GM12878 (cell line): ENCODE measurements at regions of chr18 and their contacts with region 1.

Region 1: GRCh38 chr18:45879681-45880655 is 54.5 kb downstream of the SIGLEC15 start:
- DNase-seq: peak; percentile 17
- ATAC-seq: peak; percentile 96
- H3K4me3 ChIP-seq: no peak overlapping the region
- H3K27ac ChIP-seq: no peak overlapping the region
- H3K4me1 ChIP-seq: peaks cover 5% of the 10 kb centered on the region; the same call in 1 of the 2 replicates
- H3K27me3 ChIP-seq: no peaks in the 10 kb centered on the region
- CTCF ChIP-seq: peak; percentile 95 to 99 (median 99)
- EP300 ChIP-seq: no peak
- POLR2A ChIP-seq: no peak
- RAD21 ChIP-seq: peak; percentile 93

Region 2: DNA sequence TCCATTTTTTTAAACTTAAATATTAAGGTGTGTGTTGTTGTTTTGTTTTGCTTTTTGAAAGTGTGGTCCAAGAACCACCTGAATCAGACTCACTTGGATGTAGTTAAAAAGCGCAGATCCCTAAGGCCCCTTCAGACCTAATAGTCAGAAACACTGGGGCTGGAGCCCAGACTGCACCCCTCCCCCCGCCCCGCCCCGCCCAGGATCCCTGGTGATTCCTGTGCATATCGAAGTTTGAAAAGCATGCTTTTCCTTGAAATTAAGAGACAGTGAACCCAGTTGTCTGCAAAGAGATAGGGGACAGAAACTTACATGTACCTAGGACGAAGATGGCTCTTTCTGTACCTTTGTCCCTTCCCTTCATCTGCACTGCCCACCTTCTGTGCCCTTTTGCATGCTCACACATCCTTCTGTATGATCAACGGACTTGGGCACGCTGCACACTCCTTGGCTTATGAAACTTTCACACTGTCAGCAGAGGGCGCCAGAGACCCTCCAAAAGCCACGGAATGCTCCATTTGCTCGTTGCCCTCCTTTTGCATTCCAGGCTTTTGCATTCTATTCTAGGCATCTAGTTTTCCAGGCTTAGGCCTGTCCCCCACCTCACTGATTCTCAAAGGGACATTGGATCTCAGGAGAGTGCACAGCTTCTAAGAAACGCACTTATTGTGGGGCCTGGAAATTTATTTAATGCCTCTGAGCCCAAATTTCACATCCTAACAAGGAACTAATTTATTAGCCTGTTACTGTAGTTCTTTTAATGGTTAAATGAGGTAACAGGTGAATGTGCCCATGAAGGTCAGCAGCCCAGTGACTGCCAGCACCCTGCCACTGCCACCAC is 188.8 kb before region 1 on chr18:
- CTCF ChIA-PET with region 1: interaction called, 126 read pairs
- POLR2A ChIA-PET with region 1: interaction called, 3 read pairs
- RAD21 ChIA-PET with region 1: interaction called, 68 read pairs
- SMC1A ChIA-PET with region 1: interaction called, 88 read pairs
- in situ Hi-C with region 1: loop called (anchors 5 kb)
- intact Hi-C with region 1: loop called (anchors 1 kb)
- DNase-seq: no peak
- ATAC-seq: peak; percentile 28
- H3K4me3 ChIP-seq: no peak overlapping the region
- H3K27ac ChIP-seq: no peak overlapping the region
- H3K4me1 ChIP-seq: peaks cover 32% of the 10 kb centered on the region
- H3K27me3 ChIP-seq: no peaks in the 10 kb centered on the region
- CTCF ChIP-seq: peak; percentile 79 to 93 (median 82)
- EP300 ChIP-seq: no peak
- POLR2A ChIP-seq: no peak
- RAD21 ChIP-seq: peak; percentile 91

Region 3: GRCh38 chr18:45730832-45731575 is 149.0 kb before region 1 on chr18:
- CTCF ChIA-PET with region 1: interaction called, 189 read pairs
- POLR2A ChIA-PET with region 1: no interaction called
- RAD21 ChIA-PET with region 1: interaction called, 87 read pairs
- SMC1A ChIA-PET with region 1: interaction called, 162 read pairs
- in situ Hi-C with region 1: no loop called
- intact Hi-C with region 1: no loop called
- DNase-seq: no peak
- ATAC-seq: no peak
- H3K4me3 ChIP-seq: no peak overlapping the region
- H3K27ac ChIP-seq: no peak overlapping the region
- H3K4me1 ChIP-seq: no peaks in the 10 kb centered on the region
- H3K27me3 ChIP-seq: no peaks in the 10 kb centered on the region; a peak in 2 of 4 replicates
- CTCF ChIP-seq: no peak
- EP300 ChIP-seq: no peak
- POLR2A ChIP-seq: no peak
- RAD21 ChIP-seq: no peak

Region 4: DNA sequence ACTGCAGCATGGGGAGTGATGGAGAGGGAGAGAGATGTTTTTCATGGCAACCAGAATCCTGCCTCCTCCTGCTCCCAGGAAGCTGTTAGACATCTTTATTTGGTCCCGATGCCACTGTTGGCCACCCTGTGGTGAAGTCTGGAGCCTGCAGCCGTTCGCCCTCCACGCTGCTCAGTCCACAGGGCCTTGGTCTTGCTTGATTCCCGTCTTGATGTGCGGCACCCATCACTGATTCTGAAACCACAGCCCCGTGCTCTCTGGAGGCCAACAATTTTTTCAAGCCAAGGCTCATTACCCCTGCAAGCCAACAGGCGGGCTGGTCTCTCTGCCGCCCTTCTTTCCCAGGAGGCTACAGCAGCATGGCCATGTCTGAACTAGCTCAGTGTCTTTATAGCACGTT is 29.9 kb before region 1 on chr18:
- CTCF ChIA-PET with region 1: interaction called, 15 read pairs
- POLR2A ChIA-PET with region 1: no interaction called
- RAD21 ChIA-PET with region 1: interaction called, 5 read pairs
- SMC1A ChIA-PET with region 1: interaction called, 8 read pairs
- in situ Hi-C with region 1: no loop called
- intact Hi-C with region 1: no loop called
- DNase-seq: peak; percentile 40
- ATAC-seq: peak; percentile 91
- H3K4me3 ChIP-seq: no peak overlapping the region
- H3K27ac ChIP-seq: peak overlapping the region; percentile 31; the same call in 1 of the 2 replicates
- H3K4me1 ChIP-seq: peaks cover 9% of the 10 kb centered on the region; the same call in 1 of the 2 replicates
- H3K27me3 ChIP-seq: no peaks in the 10 kb centered on the region
- CTCF ChIP-seq: peak; percentile 17 to 55 (median 30); a peak in 3 of 6 replicates
- EP300 ChIP-seq: no peak
- POLR2A ChIP-seq: no peak
- RAD21 ChIP-seq: no peak

Region 5: GRCh38 chr18:45967007-45967706 is 87.2 kb after region 1 on chr18 and contains the start of gene EPG5:
- CTCF ChIA-PET with region 1: interaction called, 12 read pairs
- POLR2A ChIA-PET with region 1: no interaction called
- RAD21 ChIA-PET with region 1: no interaction called
- SMC1A ChIA-PET with region 1: no interaction called
- in situ Hi-C with region 1: no loop called
- intact Hi-C with region 1: no loop called
- DNase-seq: peak; percentile 68
- ATAC-seq: peak; percentile 95
- H3K4me3 ChIP-seq: peak within 1 kb of the TSS; percentile 97
- H3K27ac ChIP-seq: peak within 1 kb of the TSS; percentile 72
- H3K4me1 ChIP-seq: no peaks in the 10 kb centered on the region
- H3K27me3 ChIP-seq: no peaks in the 10 kb centered on the region
- CTCF ChIP-seq: no peak
- EP300 ChIP-seq: no peak
- POLR2A ChIP-seq: peak; percentile 79
- RAD21 ChIP-seq: no peak
- polyA plus RNA-seq, gene EPG5: 1.9 to 2.3 TPM